ENCODE measurements at regions of chr9 and their contacts with region 1.

Region 1: DNA sequence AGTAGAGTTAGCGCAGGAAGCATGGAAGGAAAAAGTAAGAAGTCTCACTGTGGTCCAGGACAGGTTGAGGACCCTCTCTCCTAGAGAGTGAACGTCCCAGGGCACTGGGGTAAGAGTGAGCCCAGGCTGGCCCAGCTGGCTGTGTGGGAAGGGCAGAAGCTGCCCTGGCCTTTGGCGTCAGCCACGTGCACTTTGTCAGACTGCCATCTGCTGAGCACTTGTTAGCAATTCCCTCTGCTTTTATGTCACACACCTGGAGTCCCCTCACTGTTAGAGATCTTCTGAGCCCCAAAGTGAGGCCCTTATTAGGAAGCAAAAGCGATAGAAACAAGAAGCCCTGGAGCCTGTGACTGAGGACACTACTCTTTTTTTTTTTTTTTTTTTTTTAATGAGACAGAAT is 79.1 kb downstream of the UGCG start:
- DNase-seq: no peak
- ATAC-seq: peak; percentile 69
- H3K4me3 Mint-ChIP-seq: no peak overlapping the region
- H3K27ac Mint-ChIP-seq: no peak overlapping the region
- H3K4me1 Mint-ChIP-seq: peaks cover 35% of the 10 kb centered on the region
- H3K27me3 Mint-ChIP-seq: no peaks in the 10 kb centered on the region
- CTCF ChIP-seq: no peak

Region 2: GRCh38 chr9:111759762-111760639 is 215.7 kb before region 1 on chr9:
- CTCF ChIA-PET with region 1: interaction called, 3 read pairs
- POLR2A ChIA-PET with region 1: interaction called, 6 read pairs
- intact Hi-C with region 1: loop called (anchors 2 kb)
- DNase-seq: no peak
- ATAC-seq: peak; percentile 84
- H3K4me3 Mint-ChIP-seq: no peak overlapping the region
- H3K27ac Mint-ChIP-seq: no peak overlapping the region
- H3K4me1 Mint-ChIP-seq: peaks cover 4% of the 10 kb centered on the region
- H3K27me3 Mint-ChIP-seq: no peaks in the 10 kb centered on the region
- CTCF ChIP-seq: peak; percentile 55

Region 3: GRCh38 chr9:111828193-111828592 is 147.5 kb before region 1 on chr9:
- CTCF ChIA-PET with region 1: no interaction called
- POLR2A ChIA-PET with region 1: no interaction called
- intact Hi-C with region 1: loop called (anchors 5 kb)
- DNase-seq: no peak
- ATAC-seq: no peak
- H3K4me3 Mint-ChIP-seq: no peak overlapping the region
- H3K27ac Mint-ChIP-seq: no peak overlapping the region
- H3K4me1 Mint-ChIP-seq: peaks cover 10% of the 10 kb centered on the region
- H3K27me3 Mint-ChIP-seq: no peaks in the 10 kb centered on the region
- CTCF ChIP-seq: no peak

Region 4: GRCh38 chr9:111965566-111966019 is 10.1 kb before region 1 on chr9:
- CTCF ChIA-PET with region 1: interaction called, 4 read pairs
- POLR2A ChIA-PET with region 1: interaction called, 6 read pairs
- intact Hi-C with region 1: loop called (anchors 1 kb)
- DNase-seq: no peak
- ATAC-seq: peak; percentile 64
- H3K4me3 Mint-ChIP-seq: peak overlapping the region; percentile 12
- H3K27ac Mint-ChIP-seq: peak overlapping the region; percentile 75
- H3K4me1 Mint-ChIP-seq: peaks cover 34% of the 10 kb centered on the region
- H3K27me3 Mint-ChIP-seq: no peaks in the 10 kb centered on the region
- CTCF ChIP-seq: no peak

Region 5: DNA sequence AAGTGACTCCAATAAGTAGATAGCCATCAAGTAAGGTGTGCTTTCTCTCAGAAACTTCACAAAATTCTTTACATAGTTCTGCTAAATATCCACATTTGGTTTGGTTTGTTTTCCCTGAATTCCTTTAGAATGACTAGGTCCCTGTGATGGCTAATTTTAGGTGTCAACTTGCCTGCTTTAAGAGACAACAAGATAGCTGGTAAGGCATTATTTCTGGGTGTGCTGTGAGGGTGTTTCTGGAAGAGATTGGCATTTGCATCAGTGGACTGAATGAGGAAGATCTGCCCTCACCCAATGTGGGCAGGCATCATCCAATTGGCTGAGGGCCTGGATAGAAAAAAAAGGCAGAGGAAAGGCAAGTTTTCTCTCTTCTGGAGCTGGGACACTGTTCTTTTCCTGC is 366.0 kb after region 1 on chr9:
- CTCF ChIA-PET with region 1: no interaction called
- POLR2A ChIA-PET with region 1: no interaction called
- intact Hi-C with region 1: no loop called
- DNase-seq: no peak
- ATAC-seq: no peak
- H3K4me3 Mint-ChIP-seq: no peak overlapping the region
- H3K27ac Mint-ChIP-seq: no peak overlapping the region
- H3K4me1 Mint-ChIP-seq: no peaks in the 10 kb centered on the region
- H3K27me3 Mint-ChIP-seq: no peaks in the 10 kb centered on the region
- CTCF ChIP-seq: no peak

Measured in activated B cell treated with CpG ODN at 0.5 μM for 24 hours (primary cell).